Activated CD8-positive, alpha-beta T cell treated with anti-CD3 and anti-CD28 coated beads for 36 hours (primary cell): ENCODE measurements at regions of chr3 and their contacts with region 1.

Region 1: DNA sequence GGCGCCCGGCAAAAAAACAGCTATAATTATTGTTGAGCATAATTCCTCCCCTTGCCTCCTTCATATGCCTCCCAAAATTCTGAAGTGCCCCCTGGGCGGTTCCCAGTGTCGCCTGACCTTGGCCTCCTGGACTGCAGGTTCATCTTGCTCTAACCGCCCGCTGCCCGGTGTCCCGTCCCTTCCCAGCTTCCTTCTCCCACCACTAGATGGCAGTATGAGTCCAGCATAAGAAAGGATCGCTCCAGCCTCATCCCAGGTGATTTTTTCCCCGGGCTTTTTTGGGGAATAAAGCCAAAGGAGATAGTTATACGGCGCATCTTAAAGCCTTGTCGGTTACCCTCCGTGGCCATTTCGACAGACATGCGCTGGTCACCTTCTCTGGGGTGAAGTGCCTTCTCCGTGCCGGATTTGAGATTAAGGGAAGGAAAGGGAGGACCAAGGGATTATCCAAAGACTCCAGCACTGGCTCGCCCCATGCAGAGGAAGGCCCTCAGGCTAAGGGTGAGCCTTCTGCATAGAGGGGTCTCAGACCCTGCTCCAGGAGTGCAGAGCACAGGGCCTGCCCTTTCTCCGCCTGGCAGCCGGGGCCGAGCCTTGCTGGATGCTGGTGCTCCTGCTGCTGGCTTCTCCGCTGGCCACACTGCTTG is 45.8 kb upstream of the TRA2B start:
- DNase-seq: peak; percentile 66
- ATAC-seq: peak; percentile 77
- H3K4me3 Mint-ChIP-seq: no peak overlapping the region
- H3K27ac Mint-ChIP-seq: no peak overlapping the region
- H3K4me1 Mint-ChIP-seq: peaks cover 6% of the 10 kb centered on the region
- H3K27me3 Mint-ChIP-seq: peaks cover 6% of the 10 kb centered on the region
- CTCF ChIP-seq: peak; percentile 98

Region 2: GRCh38 chr3:185968168-185968567 is 15.4 kb before region 1 on chr3:
- CTCF ChIA-PET with region 1: interaction called, 10 read pairs
- POLR2A ChIA-PET with region 1: no interaction called
- intact Hi-C with region 1: no loop called
- DNase-seq: no peak
- ATAC-seq: no peak
- H3K4me3 Mint-ChIP-seq: no peak overlapping the region
- H3K27ac Mint-ChIP-seq: no peak overlapping the region
- H3K4me1 Mint-ChIP-seq: no peaks in the 10 kb centered on the region
- H3K27me3 Mint-ChIP-seq: peaks cover 3% of the 10 kb centered on the region
- CTCF ChIP-seq: no peak

Region 3: DNA sequence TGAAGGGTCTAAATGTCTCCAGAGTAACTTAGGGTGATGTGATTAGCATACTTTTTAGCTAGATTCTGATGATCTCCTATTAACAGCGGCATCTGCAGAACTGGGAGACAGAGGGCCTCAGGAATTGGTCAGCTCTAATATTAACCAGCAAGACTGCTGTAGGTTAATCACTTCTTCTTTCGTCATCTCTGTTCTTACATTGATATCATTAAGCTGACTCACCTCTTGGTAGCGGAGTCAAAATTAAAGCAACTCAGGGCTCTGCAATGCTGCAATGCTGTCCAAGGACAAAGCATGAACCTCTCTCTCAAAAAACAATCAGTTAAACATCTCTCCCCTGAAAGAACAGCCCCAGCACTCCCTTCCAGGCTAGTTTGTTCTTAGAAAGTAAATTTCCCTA is 11.7 kb after region 1 on chr3:
- CTCF ChIA-PET with region 1: interaction called, 23 read pairs
- POLR2A ChIA-PET with region 1: no interaction called
- intact Hi-C with region 1: no loop called
- DNase-seq: no peak
- ATAC-seq: no peak
- H3K4me3 Mint-ChIP-seq: no peak overlapping the region
- H3K27ac Mint-ChIP-seq: no peak overlapping the region
- H3K4me1 Mint-ChIP-seq: no peaks in the 10 kb centered on the region
- H3K27me3 Mint-ChIP-seq: peaks cover 6% of the 10 kb centered on the region
- CTCF ChIP-seq: no peak

Region 4: DNA sequence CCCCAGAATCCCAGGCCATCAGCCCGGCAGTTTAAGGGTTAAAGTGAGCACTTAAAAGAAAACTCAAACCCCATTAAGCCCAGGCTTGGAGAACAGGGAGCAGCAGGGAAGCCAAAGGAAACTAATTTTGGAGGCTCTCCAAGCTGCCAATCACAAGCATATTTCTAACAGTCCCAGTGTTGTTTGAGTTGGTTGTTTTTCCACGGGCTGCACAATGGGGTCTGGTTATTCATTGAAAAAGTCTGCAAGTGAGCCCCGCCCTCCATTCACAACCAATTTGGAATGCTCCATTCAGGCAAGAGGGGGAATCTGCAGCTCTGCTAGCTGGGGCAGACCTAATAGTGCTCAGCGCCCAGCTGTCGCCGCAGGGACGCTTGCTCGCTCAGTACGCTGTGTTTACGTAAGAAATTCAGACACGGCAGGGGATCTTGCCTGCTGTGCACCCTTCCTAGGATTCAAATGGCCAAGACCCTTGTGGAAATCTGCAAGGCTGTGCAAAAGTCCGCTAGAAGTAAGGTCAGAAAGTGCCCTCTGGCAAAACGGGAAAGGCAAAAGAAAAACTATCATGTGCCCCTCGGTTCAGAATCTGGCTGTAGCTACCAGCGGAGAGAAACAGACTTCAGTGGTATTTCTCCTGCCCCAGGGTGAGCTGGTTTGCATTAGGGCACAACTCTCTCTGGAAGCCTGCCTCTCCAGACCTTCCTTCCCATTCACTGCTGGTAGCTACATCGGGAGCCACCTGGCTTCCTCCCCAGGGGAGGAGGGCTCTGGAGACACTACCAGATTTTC is 114.2 kb after region 1 on chr3:
- CTCF ChIA-PET with region 1: no interaction called
- POLR2A ChIA-PET with region 1: no interaction called
- intact Hi-C with region 1: loop called (anchors 10 kb)
- DNase-seq: peak; percentile 10
- ATAC-seq: peak; percentile 51
- H3K4me3 Mint-ChIP-seq: no peak overlapping the region
- H3K27ac Mint-ChIP-seq: no peak overlapping the region
- H3K4me1 Mint-ChIP-seq: peaks cover 4% of the 10 kb centered on the region
- H3K27me3 Mint-ChIP-seq: peaks cover 57% of the 10 kb centered on the region
- CTCF ChIP-seq: no peak

Region 5: GRCh38 chr3:186241910-186242821 is 258.5 kb after region 1 on chr3:
- CTCF ChIA-PET with region 1: interaction called, 18 read pairs
- POLR2A ChIA-PET with region 1: no interaction called
- intact Hi-C with region 1: loop called (anchors 5 kb)
- DNase-seq: peak; percentile 87
- ATAC-seq: peak; percentile 99
- H3K4me3 Mint-ChIP-seq: peak overlapping the region; percentile 17
- H3K27ac Mint-ChIP-seq: no peak overlapping the region
- H3K4me1 Mint-ChIP-seq: peaks cover 6% of the 10 kb centered on the region
- H3K27me3 Mint-ChIP-seq: peaks cover 20% of the 10 kb centered on the region
- CTCF ChIP-seq: peak; percentile 64